Esophagus squamous epithelium (tissue), 5 donors: ENCODE measurements at regions of chr2 and their contacts with region 1.

Region 1: GRCh38 chr2:42086500-42086953 is 38.7 kb downstream of the PKDCC start:
- DNase-seq: no peak
- H3K4me3 ChIP-seq: no peak overlapping the region
- H3K27ac ChIP-seq: no peak overlapping the region
- H3K4me1 ChIP-seq: peaks cover 0 to 25% (median 10%) of the 10 kb centered on the region in 3 donors
- H3K27me3 ChIP-seq: peaks cover 0 to 11% (median 0%) of the 10 kb centered on the region in 4 donors
- CTCF ChIP-seq: peak; percentile 61 to 82 (median 74)
- POLR2A ChIP-seq: no peak

Region 2: DNA sequence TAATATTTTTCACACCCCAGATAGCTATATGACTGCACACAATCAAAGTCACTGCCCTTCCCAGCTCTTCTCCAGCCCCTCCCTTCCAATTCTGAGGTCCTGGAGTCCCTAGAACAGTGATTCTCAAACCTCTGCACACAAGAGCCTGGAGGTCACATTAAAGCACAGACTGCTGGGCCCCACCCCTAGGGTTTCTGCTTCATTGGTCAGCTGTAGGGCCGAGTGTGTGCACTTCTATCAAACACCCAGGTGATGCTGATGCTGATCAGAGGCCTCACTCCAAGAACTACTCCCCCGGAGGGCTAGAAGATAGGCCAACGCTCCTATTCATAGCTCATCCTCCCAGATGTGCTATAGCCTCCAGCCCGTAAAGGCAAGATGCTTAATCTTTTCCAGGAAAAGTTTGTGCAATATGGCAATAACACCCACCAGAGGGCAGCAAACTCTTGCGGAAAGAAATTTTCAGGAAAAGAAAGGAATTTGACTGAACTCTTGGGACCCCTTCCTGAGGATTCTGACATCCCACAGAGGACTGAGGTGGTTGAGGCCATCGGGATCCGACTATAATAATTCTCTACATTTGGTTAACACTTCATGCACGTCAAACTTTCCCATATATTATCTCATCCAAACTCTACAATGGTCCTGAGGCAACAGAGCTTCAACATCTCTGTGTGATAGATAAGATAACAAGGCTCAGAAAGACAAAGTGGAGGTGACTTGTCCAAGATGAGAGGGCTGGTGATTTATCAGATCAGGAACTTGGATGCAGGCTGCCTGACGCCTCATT is 232.9 kb before region 1 on chr2:
- intact Hi-C with region 1: loop called (anchors 5 kb)
- DNase-seq: no peak
- H3K4me3 ChIP-seq: no peak overlapping the region
- H3K27ac ChIP-seq: no peak overlapping the region
- H3K4me1 ChIP-seq: no peaks in the 10 kb centered on the region
- H3K27me3 ChIP-seq: peaks cover 0 to 21% (median 0%) of the 10 kb centered on the region in 4 donors
- CTCF ChIP-seq: peak; percentile 49 to 71 (median 63)
- POLR2A ChIP-seq: no peak

Region 3: DNA sequence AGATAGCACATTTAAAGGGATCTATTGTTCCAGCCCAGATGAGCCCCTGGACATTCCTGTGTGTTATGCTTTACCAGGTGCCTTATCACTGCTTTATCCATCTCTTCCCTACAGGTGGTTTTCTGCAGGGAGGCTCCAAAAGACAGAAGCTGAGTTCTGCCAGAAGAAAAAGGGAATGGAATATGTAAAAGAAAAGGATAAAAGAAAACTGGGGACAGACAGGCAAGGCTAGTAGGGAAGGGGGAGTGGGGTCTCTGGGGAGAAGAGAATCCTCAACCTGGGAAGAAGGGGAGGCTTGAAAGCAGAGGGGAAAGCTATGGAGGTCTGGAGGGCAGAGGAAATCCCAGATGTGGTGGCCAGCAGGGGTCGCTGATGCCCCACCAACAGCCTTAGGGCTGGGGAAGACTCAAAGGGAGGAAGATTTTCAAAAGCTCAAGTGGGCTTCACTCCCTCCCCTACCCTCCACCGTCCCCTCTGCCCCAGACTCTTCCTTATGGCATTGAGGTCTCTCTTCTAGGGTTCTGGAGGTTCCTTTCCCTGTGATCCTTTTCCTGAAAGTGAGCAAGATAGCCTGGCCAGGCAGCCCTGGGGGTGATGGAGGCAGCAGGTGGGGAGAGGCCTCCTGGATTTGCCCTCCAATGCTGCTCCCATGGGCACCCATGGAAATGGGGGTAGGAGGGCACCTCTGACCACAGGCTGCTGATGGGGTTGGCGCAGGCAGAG is 216.8 kb before region 1 on chr2:
- intact Hi-C with region 1: loop called (anchors 5 kb)
- DNase-seq: no peak
- H3K4me3 ChIP-seq: no peak overlapping the region
- H3K27ac ChIP-seq: no peak overlapping the region
- H3K4me1 ChIP-seq: peaks cover 0 to 4% (median 0%) of the 10 kb centered on the region in 3 donors
- H3K27me3 ChIP-seq: peaks cover 0 to 10% (median 0%) of the 10 kb centered on the region in 4 donors
- CTCF ChIP-seq: peak; percentile 74 to 84 (median 79)
- POLR2A ChIP-seq: no peak